PC-9 (cell line): ENCODE measurements at regions of chr15 and their contacts with region 1.

Region 1: DNA sequence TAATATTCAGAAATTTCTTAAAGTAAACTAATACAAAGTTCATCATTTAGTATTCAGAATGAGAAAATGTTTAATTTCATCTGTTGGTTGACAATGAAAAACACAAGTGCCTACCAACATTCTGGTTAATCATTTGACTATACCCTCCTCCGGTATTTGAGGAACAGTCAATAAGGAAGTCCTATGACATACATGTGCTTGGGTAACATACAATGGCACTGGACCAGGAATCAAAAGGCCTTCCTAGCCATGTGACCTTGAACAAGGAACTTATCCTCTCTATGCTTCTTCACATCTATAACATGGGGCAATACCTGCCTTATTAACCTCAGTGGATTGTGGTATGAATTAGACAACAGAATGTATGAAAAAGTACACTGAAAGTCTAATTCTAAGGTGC is 65.8 kb downstream of the ZNF280D start:
- DNase-seq: no peak
- H3K4me3 ChIP-seq: no peak overlapping the region
- H3K27ac ChIP-seq: no peak overlapping the region
- H3K4me1 ChIP-seq: no peaks in the 10 kb centered on the region
- H3K27me3 ChIP-seq: no peaks in the 10 kb centered on the region
- CTCF ChIP-seq: no peak

Region 2: DNA sequence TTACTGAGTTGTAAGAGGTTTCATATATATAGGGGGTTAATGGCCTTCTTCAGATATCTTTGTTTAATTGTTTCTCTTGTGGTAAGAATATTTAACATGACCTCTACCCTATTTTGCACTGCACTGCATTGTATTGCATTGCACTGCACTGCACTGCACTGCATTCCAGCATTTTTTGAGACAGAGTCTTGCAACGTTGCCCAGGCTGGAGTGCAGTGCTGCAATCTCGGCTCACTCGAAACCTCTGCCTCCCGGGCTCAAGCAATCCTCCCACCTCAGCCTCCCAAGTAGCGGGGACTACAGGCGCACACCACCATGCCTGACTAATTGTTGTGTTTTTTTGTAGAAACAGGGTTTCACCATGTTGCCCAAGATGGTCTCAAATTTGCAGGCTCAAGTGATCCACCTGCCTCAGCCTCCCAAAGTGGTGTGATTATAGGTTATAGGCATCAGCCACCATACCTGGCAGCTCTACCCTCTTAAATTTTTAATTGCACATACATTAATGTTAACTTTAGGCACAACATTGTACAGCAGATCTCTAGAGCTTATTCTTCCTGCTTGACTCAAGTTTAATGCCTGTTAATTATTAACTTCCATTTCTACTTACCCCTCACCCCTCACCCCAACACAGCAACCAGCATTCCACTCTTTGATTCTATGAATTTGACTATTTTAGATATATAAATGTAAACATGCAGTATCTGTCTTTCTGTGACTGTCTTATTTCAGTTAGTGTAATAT is 712.5 kb before region 1 on chr15:
- CTCF ChIA-PET with region 1: no interaction called
- POLR2A ChIA-PET with region 1: no interaction called
- intact Hi-C with region 1: no loop called
- DNase-seq: no peak
- H3K4me3 ChIP-seq: no peak overlapping the region
- H3K27ac ChIP-seq: no peak overlapping the region
- H3K4me1 ChIP-seq: no peaks in the 10 kb centered on the region
- H3K27me3 ChIP-seq: no peaks in the 10 kb centered on the region
- CTCF ChIP-seq: no peak

Region 3: DNA sequence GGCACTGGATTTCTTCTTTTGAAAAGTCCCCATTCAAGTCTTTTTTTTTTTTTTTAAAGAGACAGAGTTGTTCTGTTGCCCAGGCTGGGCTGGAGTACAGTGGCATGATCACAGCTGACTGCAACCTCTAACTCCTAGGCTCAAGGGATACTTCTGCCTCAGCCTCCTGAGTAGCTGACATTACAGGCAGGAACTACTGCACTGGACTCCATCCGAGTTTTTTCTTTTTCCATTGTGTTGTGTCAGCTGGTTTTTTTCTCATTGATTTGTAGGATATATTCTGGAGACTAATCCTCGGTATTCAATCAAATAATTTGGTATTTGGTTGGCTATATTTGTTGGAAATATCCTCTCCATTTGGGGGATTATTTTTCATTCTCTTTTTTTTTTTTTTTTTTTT is 1050.8 kb after region 1 on chr15:
- CTCF ChIA-PET with region 1: no interaction called
- POLR2A ChIA-PET with region 1: interaction called, 12 read pairs
- intact Hi-C with region 1: no loop called
- DNase-seq: no peak
- H3K4me3 ChIP-seq: no peak overlapping the region
- H3K27ac ChIP-seq: no peak overlapping the region
- H3K4me1 ChIP-seq: no peaks in the 10 kb centered on the region
- H3K27me3 ChIP-seq: no peaks in the 10 kb centered on the region
- CTCF ChIP-seq: no peak